Activated naive CD4-positive, alpha-beta T cell treated with anti-CD3 and anti-CD28 coated beads, Interleukin-2, amount 10 ng/mL, durations not matched to agents 7 days and 5 days (primary cell): ENCODE measurements at regions of chr20 and their contacts with region 1.

Region 1: GRCh38 chr20:46681032-46681854 is 8.0 kb downstream of the TP53RK start:
- DNase-seq: peak; percentile 84
- H3K4me3 Mint-ChIP-seq: no peak overlapping the region
- H3K27ac Mint-ChIP-seq: peak overlapping the region; percentile 9
- H3K4me1 Mint-ChIP-seq: peaks cover 14% of the 10 kb centered on the region
- H3K27me3 Mint-ChIP-seq: no peaks in the 10 kb centered on the region

Region 2: GRCh38 chr20:46552460-46553420 is 128.5 kb before region 1 on chr20:
- CTCF ChIA-PET with region 1: interaction called, 32 read pairs
- DNase-seq: peak; percentile 75
- H3K4me3 Mint-ChIP-seq: peak overlapping the region; percentile 52
- H3K27ac Mint-ChIP-seq: peak overlapping the region; percentile 81
- H3K4me1 Mint-ChIP-seq: peaks cover 55% of the 10 kb centered on the region
- H3K27me3 Mint-ChIP-seq: peaks cover 32% of the 10 kb centered on the region

Region 3: GRCh38 chr20:46670585-46671584 is 10.4 kb before region 1 on chr20:
- CTCF ChIA-PET with region 1: no interaction called
- DNase-seq: no peak
- H3K4me3 Mint-ChIP-seq: no peak overlapping the region
- H3K27ac Mint-ChIP-seq: no peak overlapping the region
- H3K4me1 Mint-ChIP-seq: no peaks in the 10 kb centered on the region
- H3K27me3 Mint-ChIP-seq: peaks cover 7% of the 10 kb centered on the region